ENCODE measurements at regions of chr2 and their contacts with region 1.

Region 1: DNA sequence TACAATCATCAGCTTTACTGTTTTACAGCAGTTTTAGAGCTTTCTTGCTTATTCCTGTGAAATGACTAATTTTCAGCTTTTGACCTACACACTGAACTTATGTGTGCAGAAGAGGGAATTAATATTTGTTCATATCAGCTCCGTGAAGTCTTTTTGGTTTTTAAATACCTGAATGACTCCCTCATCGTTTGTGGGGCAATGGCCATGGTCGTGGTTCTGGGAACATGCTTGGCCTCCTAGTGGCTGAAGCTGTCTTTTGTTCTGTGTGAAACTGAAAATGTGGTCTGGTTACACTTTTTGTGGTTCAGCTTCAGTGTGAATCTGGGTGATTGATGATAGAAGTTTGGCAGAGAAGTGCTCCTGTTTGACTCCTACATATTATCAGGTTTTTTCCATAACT is 408.1 kb downstream of the THSD7B start:
- DNase-seq: peak; percentile 52
- H3K4me3 Mint-ChIP-seq: no peak overlapping the region
- H3K27ac Mint-ChIP-seq: no peak overlapping the region
- H3K4me1 Mint-ChIP-seq: peaks cover 35% of the 10 kb centered on the region
- H3K27me3 Mint-ChIP-seq: no peaks in the 10 kb centered on the region
- CTCF ChIP-seq: peak; percentile 43

Region 2: GRCh38 chr2:136423516-136423996 is 749.9 kb before region 1 on chr2:
- CTCF ChIA-PET with region 1: no interaction called
- intact Hi-C with region 1: loop called (anchors 10 kb)
- DNase-seq: peak; percentile 82
- H3K4me3 Mint-ChIP-seq: peak overlapping the region; percentile 77
- H3K27ac Mint-ChIP-seq: no peak overlapping the region
- H3K4me1 Mint-ChIP-seq: peaks cover 9% of the 10 kb centered on the region
- H3K27me3 Mint-ChIP-seq: peaks cover 36% of the 10 kb centered on the region
- CTCF ChIP-seq: peak; percentile 91

Region 3: GRCh38 chr2:136990316-136990715 is 183.1 kb before region 1 on chr2:
- CTCF ChIA-PET with region 1: no interaction called
- intact Hi-C with region 1: no loop called
- DNase-seq: no peak
- H3K4me3 Mint-ChIP-seq: no peak overlapping the region
- H3K27ac Mint-ChIP-seq: no peak overlapping the region
- H3K4me1 Mint-ChIP-seq: no peaks in the 10 kb centered on the region
- H3K27me3 Mint-ChIP-seq: no peaks in the 10 kb centered on the region
- CTCF ChIP-seq: no peak

Region 4: DNA sequence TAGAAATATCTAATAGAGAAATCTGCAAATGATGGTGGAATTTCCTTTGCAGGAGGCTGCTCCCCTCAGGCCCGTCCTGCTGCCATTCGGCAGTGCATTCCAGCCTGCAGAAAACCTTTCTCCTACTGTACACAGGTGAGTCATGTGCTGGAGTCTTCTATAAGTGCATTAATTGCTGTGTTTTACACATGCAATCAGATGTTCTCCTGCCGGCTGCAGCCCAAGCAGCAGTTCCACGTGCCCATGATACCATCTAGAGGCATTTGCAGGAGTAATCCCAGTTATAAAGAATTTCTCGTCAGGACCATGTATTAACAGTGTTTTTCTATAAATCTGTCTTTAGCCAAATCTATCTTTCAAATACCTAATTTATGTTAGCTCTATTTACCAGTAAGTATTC is 486.1 kb after region 1 on chr2:
- CTCF ChIA-PET with region 1: no interaction called
- intact Hi-C with region 1: loop called (anchors 10 kb)
- DNase-seq: peak; percentile 46
- H3K4me3 Mint-ChIP-seq: no peak overlapping the region
- H3K27ac Mint-ChIP-seq: no peak overlapping the region
- H3K4me1 Mint-ChIP-seq: no peaks in the 10 kb centered on the region
- H3K27me3 Mint-ChIP-seq: no peaks in the 10 kb centered on the region
- CTCF ChIP-seq: no peak

Region 5: GRCh38 chr2:137847443-137847842 is 674.0 kb after region 1 on chr2:
- CTCF ChIA-PET with region 1: no interaction called
- intact Hi-C with region 1: loop called (anchors 10 kb)
- DNase-seq: peak; percentile 43
- H3K4me3 Mint-ChIP-seq: peak overlapping the region; percentile 33
- H3K27ac Mint-ChIP-seq: peak overlapping the region; percentile 95
- H3K4me1 Mint-ChIP-seq: peaks cover 8% of the 10 kb centered on the region
- H3K27me3 Mint-ChIP-seq: no peaks in the 10 kb centered on the region
- CTCF ChIP-seq: no peak

Measured in Calu3 (cell line).